ENCODE measurements at regions of chr22 and their contacts with region 1.

Region 1: DNA sequence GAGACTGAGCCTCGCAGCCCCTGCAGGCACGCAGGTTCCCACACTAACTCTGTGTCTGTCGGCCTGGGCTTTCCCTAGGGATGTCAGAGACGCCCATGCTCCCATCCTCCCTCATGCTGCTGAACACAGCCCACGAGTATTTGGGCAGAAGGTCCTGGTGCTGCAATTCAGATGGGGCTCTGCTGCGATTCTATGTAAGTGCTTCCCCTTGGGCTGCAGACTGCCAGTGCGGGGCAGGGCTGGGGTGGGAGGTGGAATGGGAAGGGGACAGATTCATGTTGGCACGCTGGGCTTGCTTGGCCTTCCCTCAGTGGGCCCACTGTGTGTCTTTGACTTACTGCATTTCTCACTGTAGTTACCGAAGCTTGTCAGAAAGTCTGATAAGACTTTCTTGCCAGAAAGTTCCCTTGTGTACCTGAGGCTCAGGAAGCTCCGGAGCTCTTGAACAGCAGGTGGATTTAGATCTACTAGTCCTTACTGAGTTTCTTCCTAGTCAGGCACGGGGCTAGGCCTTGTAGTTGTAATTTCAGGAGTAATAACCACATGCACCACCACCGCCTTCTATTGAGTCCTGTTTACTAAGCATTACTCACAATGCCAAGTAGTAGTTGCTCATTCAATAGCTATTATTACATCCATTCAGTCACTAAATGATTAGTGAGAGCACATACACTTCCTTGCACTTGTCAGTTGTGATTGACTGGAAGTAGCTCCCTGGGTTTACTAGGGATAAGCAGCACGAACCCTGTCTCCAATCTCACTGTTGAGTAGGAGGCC is 65.2 kb downstream of the CABIN1 start:
- DNase-seq: no peak
- H3K4me3 ChIP-seq: no peak overlapping the region
- H3K27ac ChIP-seq: no peak overlapping the region
- H3K4me1 ChIP-seq: no peaks in the 10 kb centered on the region
- H3K27me3 ChIP-seq: no peaks in the 10 kb centered on the region
- CTCF ChIP-seq: no peak
- EP300 ChIP-seq: no peak
- POLR2A ChIP-seq: no peak
- RAD21 ChIP-seq: no peak

Region 2: GRCh38 chr22:24027389-24027975 is 48.8 kb before region 1 on chr22:
- CTCF ChIA-PET with region 1: no interaction called
- POLR2A ChIA-PET with region 1: no interaction called
- DNase-seq: no peak
- H3K4me3 ChIP-seq: no peak overlapping the region
- H3K27ac ChIP-seq: no peak overlapping the region
- H3K4me1 ChIP-seq: no peaks in the 10 kb centered on the region; a peak in 1 of 7 replicates
- H3K27me3 ChIP-seq: no peaks in the 10 kb centered on the region
- CTCF ChIP-seq: no peak
- EP300 ChIP-seq: no peak
- POLR2A ChIP-seq: no peak
- RAD21 ChIP-seq: no peak

Region 3: DNA sequence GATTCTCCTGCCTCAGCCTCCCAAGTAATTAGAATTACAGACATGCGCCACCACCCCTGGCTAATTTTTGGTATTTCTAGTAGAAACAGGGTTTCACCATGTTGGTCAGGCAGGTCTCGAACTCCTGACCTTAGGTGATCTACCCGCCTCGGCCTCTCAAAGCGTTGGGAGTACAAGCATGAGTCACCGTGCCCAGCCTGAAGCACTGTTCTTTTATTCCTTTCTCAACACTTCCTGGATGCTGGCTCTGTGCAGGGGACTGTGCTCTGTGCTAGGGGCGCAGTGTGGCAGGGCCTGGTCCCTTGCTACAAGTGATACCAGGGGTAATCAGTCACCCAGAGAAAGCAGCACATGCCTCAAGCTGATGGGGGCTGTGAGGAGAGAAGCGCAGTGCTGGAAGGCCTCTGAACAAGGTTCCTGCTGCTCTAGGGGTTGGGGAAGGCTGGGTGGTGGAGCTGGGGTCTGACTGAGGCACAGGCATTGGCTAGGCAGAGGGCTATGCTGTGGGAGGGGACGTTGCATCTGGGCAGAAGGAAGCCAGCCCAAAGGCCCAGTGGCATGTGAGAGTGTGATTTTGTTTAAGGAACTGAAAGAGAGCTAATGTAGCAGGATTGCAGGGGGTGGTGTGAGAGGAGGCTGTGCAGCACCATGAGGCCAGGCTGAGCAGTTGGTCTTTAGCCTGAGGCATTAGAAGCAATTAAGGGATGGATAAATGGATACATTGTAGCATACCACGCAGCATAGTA is 22.6 kb before region 1 on chr22:
- CTCF ChIA-PET with region 1: no interaction called
- POLR2A ChIA-PET with region 1: no interaction called
- DNase-seq: no peak
- H3K4me3 ChIP-seq: no peak overlapping the region
- H3K27ac ChIP-seq: no peak overlapping the region
- H3K4me1 ChIP-seq: no peaks in the 10 kb centered on the region
- H3K27me3 ChIP-seq: no peaks in the 10 kb centered on the region
- CTCF ChIP-seq: no peak
- EP300 ChIP-seq: no peak
- POLR2A ChIP-seq: no peak
- RAD21 ChIP-seq: no peak

Region 4: DNA sequence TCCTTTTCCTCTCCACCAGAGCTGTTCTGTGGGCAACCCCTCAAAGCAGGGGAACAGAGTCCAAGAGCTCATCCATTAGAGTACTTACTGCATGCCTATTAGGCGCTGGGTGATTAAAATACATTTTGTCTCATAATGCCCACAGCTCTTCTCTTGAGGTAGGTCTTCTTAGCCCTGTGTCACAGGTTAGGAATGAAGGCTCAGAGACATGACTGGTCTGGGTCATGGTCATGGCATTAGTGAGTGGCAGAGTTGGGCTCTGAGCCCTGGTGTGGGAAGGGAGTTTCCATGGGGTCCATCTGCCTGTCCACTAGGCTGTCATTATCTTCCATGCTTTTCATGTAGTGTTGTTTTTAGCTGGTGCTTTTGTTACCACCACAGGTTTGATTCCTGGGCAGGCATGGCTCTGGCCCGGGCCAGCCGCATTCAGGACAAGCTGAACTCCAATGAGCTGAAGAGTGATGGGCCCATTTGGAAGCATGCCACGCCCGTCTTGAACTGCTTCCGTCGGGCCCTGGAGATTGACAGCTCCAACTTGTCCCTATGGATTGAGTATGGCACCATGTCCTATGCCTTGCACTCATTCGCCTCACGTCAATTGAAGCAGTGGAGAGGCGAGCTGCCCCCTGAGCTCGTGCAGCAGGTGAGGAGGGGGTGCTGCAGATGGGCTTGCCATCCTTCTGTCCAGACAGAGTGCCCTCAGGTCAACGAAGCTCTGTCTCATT is 11.0 kb after region 1 on chr22:
- CTCF ChIA-PET with region 1: interaction called, 11 read pairs
- POLR2A ChIA-PET with region 1: no interaction called
- DNase-seq: no peak
- H3K4me3 ChIP-seq: no peak overlapping the region
- H3K27ac ChIP-seq: no peak overlapping the region
- H3K4me1 ChIP-seq: no peaks in the 10 kb centered on the region
- H3K27me3 ChIP-seq: no peaks in the 10 kb centered on the region
- CTCF ChIP-seq: no peak
- EP300 ChIP-seq: no peak
- POLR2A ChIP-seq: no peak
- RAD21 ChIP-seq: no peak

Region 5: DNA sequence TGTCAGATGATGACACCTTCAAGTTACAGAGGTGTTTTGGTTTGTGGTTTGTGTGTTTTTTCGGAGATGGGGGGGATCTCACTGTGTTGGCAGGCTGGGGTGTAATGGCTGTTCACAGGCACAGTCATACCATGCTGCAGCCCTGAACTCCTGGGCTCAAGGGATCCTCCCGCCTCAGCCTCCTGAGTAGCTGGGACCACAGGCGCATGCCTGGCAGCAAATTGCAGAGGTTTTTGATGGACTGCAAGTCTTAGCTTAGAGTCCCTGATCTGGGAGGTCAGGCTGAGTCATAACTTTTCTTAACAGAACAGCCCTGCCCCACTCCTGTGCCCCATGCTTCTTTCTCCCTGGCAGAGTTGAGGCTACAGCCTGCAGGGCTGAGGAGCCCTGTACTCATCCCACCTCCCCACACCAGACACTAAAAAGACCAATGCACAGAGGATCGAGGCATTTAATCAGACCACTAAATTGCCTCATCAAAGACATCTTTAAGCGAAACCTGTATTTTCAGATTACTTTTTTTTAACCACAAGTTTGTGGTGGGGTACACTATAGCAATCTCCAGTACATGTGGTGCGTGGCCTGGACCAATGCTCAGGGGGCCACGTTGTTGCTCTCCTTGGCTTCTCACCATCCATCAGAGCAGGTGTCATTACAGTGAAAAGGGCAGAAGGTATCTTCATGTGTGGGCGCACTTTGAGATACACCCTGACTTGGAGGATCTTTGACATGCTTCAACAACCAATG is 334.0 kb after region 1 on chr22:
- CTCF ChIA-PET with region 1: no interaction called
- POLR2A ChIA-PET with region 1: no interaction called
- DNase-seq: no peak
- H3K4me3 ChIP-seq: no peak overlapping the region
- H3K27ac ChIP-seq: no peak overlapping the region
- H3K4me1 ChIP-seq: peaks cover 0 to 12% (median 0%) of the 10 kb centered on the region in 4 experiments; a peak in 2 of 7 replicates
- H3K27me3 ChIP-seq: no peaks in the 10 kb centered on the region
- CTCF ChIP-seq: no peak
- EP300 ChIP-seq: no peak
- POLR2A ChIP-seq: no peak
- RAD21 ChIP-seq: no peak